ENCODE measurements at regions of chr11 and their contacts with region 1.

Region 1: DNA sequence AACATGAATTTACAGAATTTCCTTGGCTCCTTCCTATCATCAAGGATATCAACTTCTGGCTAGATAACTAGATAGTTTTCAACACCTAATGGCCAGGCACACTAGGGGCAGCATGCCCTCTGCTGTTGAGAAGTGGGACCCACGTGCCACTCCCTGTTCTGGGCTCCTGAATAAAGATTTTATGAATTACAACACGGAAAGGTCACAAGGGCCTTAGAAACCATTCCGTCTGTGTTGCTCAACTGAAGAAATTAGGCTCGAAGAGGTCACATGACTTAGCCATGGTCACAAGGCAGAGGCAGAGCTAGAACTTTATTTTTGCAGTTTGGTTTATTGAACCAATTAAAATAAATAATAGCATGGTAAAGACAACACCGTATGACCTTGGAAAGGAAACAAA is 36.0 kb downstream of the PRCP start:
- DNase-seq: peak; percentile 38 to 95 (median 72)

Region 2: GRCh38 chr11:82718307-82718706 is 146.0 kb before region 1 on chr11:
- intact Hi-C with region 1: loop called (anchors 1 kb)
- DNase-seq: peak in 9 of 10 donors; percentile 37 to 90 (median 47)

Region 3: GRCh38 chr11:82936261-82936660 is 72.0 kb after region 1 on chr11:
- intact Hi-C with region 1: no loop called
- DNase-seq: no peak

Region 4: DNA sequence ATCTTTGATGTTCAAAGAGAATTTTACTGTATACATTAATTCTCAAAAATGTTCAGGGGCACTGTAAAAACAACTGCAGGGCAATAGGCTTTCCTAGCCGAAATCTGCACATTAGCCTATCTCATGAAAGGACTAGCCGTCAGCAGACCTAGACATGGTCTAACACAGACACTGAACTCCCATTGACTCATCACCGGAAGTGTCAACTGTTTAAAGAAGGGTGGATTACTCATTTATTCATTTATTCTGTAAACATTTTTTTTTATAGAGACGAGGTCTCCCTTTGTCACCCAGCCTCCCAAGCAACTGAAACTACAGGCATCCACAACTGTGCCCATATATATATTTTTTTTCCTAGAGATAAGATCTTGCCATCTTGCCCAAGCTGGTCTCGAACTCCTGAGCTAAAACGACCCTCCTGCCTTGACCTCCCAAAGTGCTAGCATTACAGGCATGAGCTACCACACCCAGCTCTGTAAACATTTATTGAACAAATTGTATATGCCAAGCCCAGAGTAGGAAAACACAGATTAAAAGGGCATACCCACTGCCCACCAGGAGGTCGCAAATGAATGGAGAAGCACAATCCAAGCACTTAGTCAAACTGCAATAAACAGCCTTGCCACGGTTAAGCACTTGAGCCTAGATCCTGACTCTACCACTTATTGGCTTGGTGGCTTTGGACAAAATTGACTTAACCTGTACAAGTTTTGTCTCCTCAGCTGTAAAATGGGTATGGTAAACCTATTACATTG is 180.9 kb after region 1 on chr11:
- intact Hi-C with region 1: no loop called
- DNase-seq: no peak